ENCODE measurements at regions of chr4 and their contacts with region 1.

Region 1: GRCh38 chr4:8403173-8403753 is 37.3 kb downstream of the ACOX3 start:
- DNase-seq: peak; percentile 48
- ATAC-seq: peak; percentile 93
- H3K4me3 ChIP-seq: no peak overlapping the region
- H3K27ac ChIP-seq: no peak overlapping the region
- H3K4me1 ChIP-seq: no peaks in the 10 kb centered on the region
- H3K27me3 ChIP-seq: no peaks in the 10 kb centered on the region
- CTCF ChIP-seq: peak; percentile 90
- EP300 ChIP-seq: no peak
- POLR2A ChIP-seq: no peak
- RAD21 ChIP-seq: peak; percentile 79

Region 2: GRCh38 chr4:8168232-8168631 is 235.0 kb before region 1 on chr4:
- CTCF ChIA-PET with region 1: no interaction called
- POLR2A ChIA-PET with region 1: no interaction called
- in situ Hi-C with region 1: loop called (anchors 10 kb)
- intact Hi-C with region 1: no loop called
- DNase-seq: no peak
- ATAC-seq: no peak
- H3K4me3 ChIP-seq: no peak overlapping the region
- H3K27ac ChIP-seq: no peak overlapping the region
- H3K4me1 ChIP-seq: no peaks in the 10 kb centered on the region
- H3K27me3 ChIP-seq: peaks cover 8 to 52% of the 10 kb centered on the region in 2 experiments; a peak in 3 of 5 replicates
- CTCF ChIP-seq: no peak
- EP300 ChIP-seq: no peak
- POLR2A ChIP-seq: no peak
- RAD21 ChIP-seq: no peak

Region 3: DNA sequence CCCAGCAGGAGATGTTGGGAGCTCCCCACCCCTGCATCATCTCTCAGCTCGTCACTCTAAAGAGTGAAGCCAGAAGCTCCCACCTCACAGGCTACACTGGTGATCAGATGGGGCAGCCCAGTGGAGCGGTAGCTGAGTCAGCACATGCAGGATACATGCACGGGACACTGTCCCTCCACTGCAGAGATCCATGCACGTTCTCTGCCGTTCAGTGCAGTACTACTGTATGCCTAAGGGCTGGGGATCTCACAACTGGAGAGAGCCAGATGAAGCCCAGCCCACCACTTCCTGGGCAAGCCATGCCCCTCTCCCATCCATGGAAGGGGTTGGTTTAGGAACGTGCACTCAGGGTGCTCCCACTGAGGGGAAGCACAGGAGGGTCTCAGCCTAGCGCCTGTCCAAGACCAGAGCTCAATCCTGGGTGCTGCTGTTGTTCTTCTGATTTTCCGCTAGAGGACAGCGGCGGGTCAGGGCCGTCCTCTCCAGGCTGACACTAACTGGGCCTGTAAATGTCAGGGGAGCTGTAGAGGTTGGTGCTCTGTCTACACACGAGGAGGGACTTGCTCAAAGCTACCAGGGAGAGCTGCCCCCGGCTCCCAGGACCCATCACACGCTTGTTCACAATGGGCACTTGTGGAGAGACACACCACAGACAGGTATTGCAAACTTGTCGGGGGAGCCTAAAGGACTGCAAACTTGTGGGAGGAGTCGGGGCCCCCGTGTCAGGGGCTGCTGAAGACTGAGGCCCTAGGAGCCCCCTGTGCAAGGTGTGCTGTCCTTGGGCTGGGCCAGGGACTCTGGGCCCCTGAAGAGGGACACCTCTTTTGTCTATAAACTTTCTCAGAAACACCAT is 226.5 kb before region 1 on chr4:
- CTCF ChIA-PET with region 1: no interaction called
- POLR2A ChIA-PET with region 1: no interaction called
- in situ Hi-C with region 1: no loop called
- intact Hi-C with region 1: loop called (anchors 2 kb)
- DNase-seq: peak; percentile 65
- ATAC-seq: peak; percentile 94
- H3K4me3 ChIP-seq: peak overlapping the region in 1 of 3 experiments; percentile 31; a peak in 1 of 6 replicates
- H3K27ac ChIP-seq: no peak overlapping the region
- H3K4me1 ChIP-seq: peaks cover 26% of the 10 kb centered on the region
- H3K27me3 ChIP-seq: peaks cover 10 to 30% of the 10 kb centered on the region in 2 experiments; a peak in 3 of 5 replicates
- CTCF ChIP-seq: peak; percentile 96
- EP300 ChIP-seq: no peak
- POLR2A ChIP-seq: no peak
- RAD21 ChIP-seq: peak; percentile 90

Region 4: GRCh38 chr4:8241895-8242696 is 161.2 kb before region 1 on chr4:
- CTCF ChIA-PET with region 1: interaction called, 29 read pairs
- POLR2A ChIA-PET with region 1: no interaction called
- in situ Hi-C with region 1: loop called (anchors 5 kb)
- intact Hi-C with region 1: loop called (anchors 1 kb)
- DNase-seq: peak; percentile 78
- ATAC-seq: peak; percentile 72
- H3K4me3 ChIP-seq: no peak overlapping the region
- H3K27ac ChIP-seq: no peak overlapping the region
- H3K4me1 ChIP-seq: peaks cover 49% of the 10 kb centered on the region
- H3K27me3 ChIP-seq: no peaks in the 10 kb centered on the region
- CTCF ChIP-seq: peak; percentile 93
- EP300 ChIP-seq: no peak
- POLR2A ChIP-seq: no peak
- RAD21 ChIP-seq: peak; percentile 91

Region 5: DNA sequence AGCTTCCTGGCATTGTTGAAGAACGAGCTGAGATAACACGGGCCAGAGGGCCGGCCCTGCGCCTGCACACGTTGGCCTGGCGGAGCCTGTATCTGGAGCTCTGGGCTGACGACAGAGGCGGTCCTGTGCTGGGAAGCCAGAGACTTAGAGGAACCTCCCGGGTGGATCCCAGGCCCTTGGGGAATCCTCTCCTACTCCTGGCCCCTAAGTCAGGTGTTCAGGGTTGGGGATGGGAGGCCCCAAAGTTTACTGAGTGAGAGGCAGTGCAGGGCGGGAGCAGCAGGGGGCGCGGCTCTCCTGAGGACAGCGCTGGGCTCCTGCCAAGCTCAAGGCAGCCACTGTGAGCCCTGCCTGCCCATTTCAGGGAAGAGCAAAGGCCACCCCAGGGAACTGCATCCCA is 136.2 kb before region 1 on chr4:
- CTCF ChIA-PET with region 1: interaction called, 20 read pairs
- POLR2A ChIA-PET with region 1: no interaction called
- in situ Hi-C with region 1: loop called (anchors 5 kb)
- intact Hi-C with region 1: loop called (anchors 1 kb)
- DNase-seq: peak; percentile 52
- ATAC-seq: peak; percentile 83
- H3K4me3 ChIP-seq: no peak overlapping the region
- H3K27ac ChIP-seq: no peak overlapping the region
- H3K4me1 ChIP-seq: peaks cover 28% of the 10 kb centered on the region
- H3K27me3 ChIP-seq: peaks cover 11 to 57% of the 10 kb centered on the region in 2 experiments
- CTCF ChIP-seq: peak; percentile 92
- EP300 ChIP-seq: no peak
- POLR2A ChIP-seq: no peak
- RAD21 ChIP-seq: peak; percentile 91

Region 6: GRCh38 chr4:8320386-8320750 is 82.9 kb before region 1 on chr4:
- CTCF ChIA-PET with region 1: interaction called, 10 read pairs
- POLR2A ChIA-PET with region 1: no interaction called
- in situ Hi-C with region 1: no loop called
- intact Hi-C with region 1: loop called (anchors 1 kb)
- DNase-seq: peak; percentile 18
- ATAC-seq: peak; percentile 50
- H3K4me3 ChIP-seq: no peak overlapping the region
- H3K27ac ChIP-seq: no peak overlapping the region
- H3K4me1 ChIP-seq: peaks cover 13% of the 10 kb centered on the region
- H3K27me3 ChIP-seq: peaks cover 1 to 24% of the 10 kb centered on the region in 2 experiments; a peak in 4 of 5 replicates
- CTCF ChIP-seq: peak; percentile 65
- EP300 ChIP-seq: no peak
- POLR2A ChIP-seq: no peak
- RAD21 ChIP-seq: no peak

Region 7: GRCh38 chr4:8340781-8341241 is 62.5 kb before region 1 on chr4:
- CTCF ChIA-PET with region 1: no interaction called
- POLR2A ChIA-PET with region 1: no interaction called
- in situ Hi-C with region 1: no loop called
- intact Hi-C with region 1: no loop called
- DNase-seq: no peak
- ATAC-seq: peak; percentile 89
- H3K4me3 ChIP-seq: no peak overlapping the region
- H3K27ac ChIP-seq: no peak overlapping the region
- H3K4me1 ChIP-seq: peaks cover 19% of the 10 kb centered on the region
- H3K27me3 ChIP-seq: peaks cover 3 to 21% of the 10 kb centered on the region in 2 experiments; a peak in 4 of 5 replicates
- CTCF ChIP-seq: no peak
- EP300 ChIP-seq: no peak
- POLR2A ChIP-seq: no peak
- RAD21 ChIP-seq: no peak

Measured in HepG2 (cell line).